Aorta (tissue), 5 donors: ENCODE measurements at regions of chr1 and their contacts with region 1.

Region 1: DNA sequence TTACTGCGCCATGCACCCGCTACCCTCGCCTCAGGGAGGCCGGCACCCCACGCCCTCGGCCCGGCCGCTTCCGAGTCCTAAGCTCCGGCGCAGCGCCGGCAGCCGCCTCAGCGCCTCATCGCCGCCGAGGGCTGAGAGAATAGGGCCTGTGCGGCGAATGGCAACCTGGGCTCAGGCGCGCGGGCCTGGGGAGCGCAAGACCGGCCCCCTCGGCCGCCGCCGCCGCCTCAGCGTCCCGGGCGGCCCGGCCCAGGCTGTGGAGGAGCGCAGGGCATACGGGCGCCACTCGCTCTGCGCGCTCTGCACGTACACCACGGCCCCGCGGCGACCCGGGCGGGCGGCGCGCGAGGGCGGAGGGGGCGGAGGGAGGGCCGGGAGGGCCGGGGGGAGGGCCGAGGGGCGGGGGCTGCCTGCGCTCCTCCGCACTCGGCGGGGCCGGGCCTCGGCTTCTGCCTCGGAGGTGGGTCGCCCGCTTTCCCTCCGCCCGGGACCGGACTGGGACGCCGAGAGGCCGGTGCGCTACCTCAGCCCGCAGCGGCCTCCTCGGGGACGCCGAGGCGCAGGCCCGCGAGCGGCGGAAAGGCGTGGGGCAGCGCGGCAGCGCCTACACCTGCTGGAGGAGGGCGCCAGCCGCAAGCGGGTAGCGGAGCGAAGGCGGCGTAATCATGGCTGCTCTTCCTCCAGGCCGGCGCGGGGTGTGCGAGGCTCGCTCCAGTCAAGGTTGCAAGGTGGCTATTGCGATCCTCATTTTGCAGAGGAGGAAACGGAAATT is at the start of gene EGLN1:
- DNase-seq: peak; percentile 90 to 94
- ATAC-seq: peak; percentile 95
- H3K4me3 ChIP-seq: peak within 1 kb of the TSS; percentile 61 to 97
- H3K27ac ChIP-seq: peak within 1 kb of the TSS; percentile 98
- H3K4me1 ChIP-seq: peaks cover 0 to 2% of the 10 kb centered on the region in 2 donors
- H3K27me3 ChIP-seq: no peaks in the 10 kb centered on the region
- total RNA-seq, gene EGLN1: 35.1 to 50.4 TPM

Region 2: GRCh38 chr1:231337472-231338269 is 84.5 kb before region 1 on chr1 and contains the start of gene EXOC8:
- intact Hi-C with region 1: loop called in 1 of 2 experiments (anchors 5 kb)
- DNase-seq: peak; percentile 96 to 99
- ATAC-seq: peak; percentile 97
- H3K4me3 ChIP-seq: peak within 1 kb of the TSS; percentile 78 to 93
- H3K27ac ChIP-seq: peak within 1 kb of the TSS; percentile 73 to 89
- H3K4me1 ChIP-seq: peaks cover 8 to 13% of the 10 kb centered on the region in 2 donors
- H3K27me3 ChIP-seq: no peaks in the 10 kb centered on the region
- total RNA-seq, gene EXOC8: 15.7 to 17.2 TPM

Region 3: DNA sequence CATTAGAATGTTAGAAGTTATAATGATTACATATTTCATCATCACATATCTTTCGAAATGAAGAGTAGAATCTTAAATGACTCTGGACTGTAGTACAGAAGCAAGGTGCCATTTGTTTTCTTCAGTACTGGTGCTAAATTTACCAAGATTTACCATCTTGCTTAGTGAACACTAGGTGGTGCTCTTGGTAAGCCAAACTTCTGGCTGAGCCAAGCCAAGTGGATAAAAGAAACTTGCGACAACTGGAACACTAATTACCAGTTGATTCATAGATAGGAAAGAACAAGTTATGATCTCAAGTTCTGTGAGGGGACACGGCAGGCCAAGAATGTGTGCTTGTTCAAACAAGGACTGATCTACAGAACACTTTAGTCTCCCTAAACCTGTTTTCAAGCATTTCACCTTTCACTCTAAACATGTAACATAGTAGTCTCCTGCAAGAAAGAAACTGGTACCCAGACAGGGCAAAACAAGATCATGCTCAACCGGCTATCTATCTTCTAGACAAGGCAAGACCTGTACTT is 64.3 kb before region 1 on chr1:
- intact Hi-C with region 1: loop called (anchors 2 to 5 kb)
- DNase-seq: no peak
- ATAC-seq: peak; percentile 89
- H3K4me3 ChIP-seq: no peak overlapping the region
- H3K27ac ChIP-seq: no peak overlapping the region
- H3K4me1 ChIP-seq: no peaks in the 10 kb centered on the region
- H3K27me3 ChIP-seq: no peaks in the 10 kb centered on the region

Region 4: DNA sequence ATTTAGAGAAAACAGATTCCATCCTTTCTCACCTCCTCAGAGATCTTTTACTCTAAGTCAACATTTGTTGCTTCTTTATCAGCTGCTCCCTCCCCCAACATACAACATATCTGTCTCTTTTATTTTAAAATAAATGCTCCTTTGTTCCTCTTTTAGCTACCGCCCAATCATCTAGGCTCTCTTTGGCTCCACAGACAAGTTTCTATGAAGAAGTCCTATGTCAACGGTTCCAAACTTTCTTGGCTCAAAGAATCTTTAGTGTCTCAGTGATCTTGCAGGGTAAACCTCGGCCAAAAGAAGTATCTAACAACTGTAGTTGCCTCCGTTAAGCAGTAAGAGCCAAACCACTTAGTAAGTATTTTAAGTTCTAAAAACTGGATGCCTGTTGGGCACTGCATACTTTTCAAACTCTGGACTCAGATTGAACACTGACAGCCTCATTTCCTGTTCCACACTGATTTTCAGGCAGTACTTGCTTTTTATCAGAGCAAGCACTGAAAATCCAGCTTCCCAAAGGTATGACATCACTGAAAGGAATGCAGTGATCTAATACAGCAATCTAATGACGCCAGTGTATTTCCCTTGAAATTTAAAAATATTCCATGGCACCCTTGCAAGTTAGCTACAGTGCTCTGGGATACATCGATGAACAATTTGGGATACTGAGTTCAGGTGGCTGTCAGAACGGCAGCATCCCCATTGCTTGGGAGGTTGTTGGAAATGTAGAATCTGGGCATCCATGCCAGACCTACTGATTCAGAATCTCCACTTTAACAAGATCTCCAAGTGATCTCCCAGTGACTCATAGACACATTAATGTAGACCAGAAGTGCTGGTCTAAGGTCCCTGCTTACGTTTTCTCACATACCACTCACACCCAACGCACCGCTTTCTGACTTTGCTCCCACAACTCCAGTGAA is 26.8 kb before region 1 on chr1:
- intact Hi-C with region 1: loop called in 1 of 2 experiments (anchors 1 kb)
- DNase-seq: no peak
- ATAC-seq: peak; percentile 85
- H3K4me3 ChIP-seq: no peak overlapping the region
- H3K27ac ChIP-seq: peak overlapping the region; percentile 82 to 91
- H3K4me1 ChIP-seq: peaks cover 3 to 7% of the 10 kb centered on the region in 2 donors
- H3K27me3 ChIP-seq: no peaks in the 10 kb centered on the region

Region 5: GRCh38 chr1:231407547-231408396 is 14.4 kb before region 1 on chr1:
- intact Hi-C with region 1: loop called in 1 of 2 experiments (anchors 2 kb)
- DNase-seq: no peak
- ATAC-seq: no peak
- H3K4me3 ChIP-seq: no peak overlapping the region
- H3K27ac ChIP-seq: peak overlapping the region; percentile 39 to 51
- H3K4me1 ChIP-seq: peaks cover 0 to 5% of the 10 kb centered on the region in 2 donors
- H3K27me3 ChIP-seq: no peaks in the 10 kb centered on the region

Region 6: GRCh38 chr1:231507476-231508355 is 85.5 kb after region 1 on chr1:
- intact Hi-C with region 1: no loop called
- DNase-seq: no peak
- ATAC-seq: no peak
- H3K4me3 ChIP-seq: no peak overlapping the region
- H3K27ac ChIP-seq: no peak overlapping the region
- H3K4me1 ChIP-seq: no peaks in the 10 kb centered on the region
- H3K27me3 ChIP-seq: no peaks in the 10 kb centered on the region

Region 7: DNA sequence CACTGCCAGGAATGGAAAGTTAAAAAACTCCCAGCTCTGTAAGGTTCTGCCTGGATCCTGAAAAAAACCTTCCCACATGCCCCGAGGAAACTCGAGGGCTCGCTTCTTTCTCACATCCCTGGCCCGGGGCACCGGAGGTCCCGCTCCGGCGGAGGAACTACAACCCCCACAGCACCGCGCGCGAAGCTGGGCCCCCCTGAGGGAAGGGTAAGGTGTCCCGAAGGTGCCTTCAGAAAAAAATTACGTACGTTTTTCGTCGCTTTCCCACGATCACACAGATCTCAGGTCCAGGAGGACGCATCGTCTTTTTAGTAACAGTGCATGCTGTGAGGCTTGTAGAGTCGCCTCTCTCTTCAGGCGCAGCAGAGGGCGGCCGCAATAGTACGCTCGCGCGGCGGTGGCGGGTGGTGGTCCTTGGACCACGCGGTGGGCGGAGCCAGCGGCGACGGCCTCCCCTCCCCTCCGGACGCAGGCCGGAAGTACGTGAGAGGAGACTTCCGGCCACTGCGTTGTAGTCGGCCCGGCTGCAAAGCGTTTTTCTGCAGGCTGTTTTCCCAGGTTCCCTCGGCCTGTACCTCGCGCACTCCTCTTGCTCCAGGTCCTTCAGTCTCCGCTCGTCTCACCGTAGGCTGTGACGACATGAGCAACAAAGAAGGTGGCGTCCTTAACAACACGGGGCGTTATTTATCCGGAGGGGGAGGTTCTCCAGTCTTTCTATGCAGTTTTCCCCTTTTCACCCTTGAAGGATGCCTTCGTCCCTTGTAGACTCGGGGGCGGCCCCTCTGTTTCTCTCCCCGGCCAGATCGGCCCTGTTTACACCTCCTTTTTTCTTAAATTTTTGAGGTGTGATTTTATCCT is 106.2 kb after region 1 on chr1 and contains the start of gene TSNAX:
- intact Hi-C with region 1: loop called (anchors 2 kb)
- DNase-seq: peak; percentile 95 to 97
- ATAC-seq: peak; percentile 100
- H3K4me3 ChIP-seq: peak within 1 kb of the TSS; percentile 71 to 74
- H3K27ac ChIP-seq: peak within 1 kb of the TSS in 1 of 2 donors; percentile 85
- H3K4me1 ChIP-seq: peaks cover 0 to 2% of the 10 kb centered on the region in 2 donors
- H3K27me3 ChIP-seq: no peaks in the 10 kb centered on the region
- total RNA-seq, gene TSNAX: 37.2 to 42.0 TPM